ENCODE measurements at regions of chr9 and their contacts with region 1.

Region 1: DNA sequence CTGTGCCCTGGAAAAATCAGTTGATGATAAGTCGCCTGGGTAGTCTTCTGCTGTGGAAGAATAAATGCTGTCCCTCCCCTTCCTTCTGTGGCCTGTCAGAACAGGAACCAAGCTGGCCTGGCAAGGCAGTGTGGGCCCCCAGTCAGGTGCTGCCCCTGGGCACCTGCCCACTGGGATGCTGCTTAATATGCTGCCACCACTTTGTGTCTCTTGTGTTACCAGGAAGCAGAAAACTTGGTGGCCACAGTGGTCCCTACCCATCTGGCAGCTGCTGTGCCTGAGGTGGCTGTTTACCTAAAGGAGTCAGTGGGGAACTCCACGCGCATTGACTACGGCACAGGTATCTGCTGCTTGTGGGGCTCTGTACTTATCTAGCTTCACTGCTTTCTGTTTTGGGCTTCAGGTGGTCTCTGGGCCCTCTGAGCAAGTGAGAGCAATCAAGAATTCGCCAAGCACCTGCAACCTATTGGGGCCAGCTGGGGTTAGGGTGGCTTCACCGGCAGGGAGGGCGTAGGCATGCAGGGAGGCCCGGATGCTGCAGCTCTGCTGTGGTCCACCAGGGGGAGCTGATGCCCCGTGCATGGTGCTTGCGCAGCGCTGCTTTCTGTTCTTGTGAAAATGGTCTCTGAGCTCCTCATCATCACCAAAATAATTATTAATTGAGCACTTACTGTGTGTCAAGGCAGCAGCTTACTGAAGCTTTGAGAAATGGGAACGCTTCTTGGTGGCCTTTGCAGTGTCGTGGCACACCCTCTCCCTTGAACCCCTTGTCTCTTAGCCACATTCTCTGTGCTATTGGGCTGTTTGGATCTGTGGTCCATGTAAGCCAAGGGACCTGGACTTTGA is 20.3 kb downstream of the PTPA start:
- DNase-seq: peak; percentile 50
- H3K4me3 ChIP-seq: no peak overlapping the region
- H3K27ac ChIP-seq: no peak overlapping the region
- H3K4me1 ChIP-seq: no peaks in the 10 kb centered on the region
- H3K27me3 ChIP-seq: no peaks in the 10 kb centered on the region
- CTCF ChIP-seq: peak; percentile 99

Region 2: DNA sequence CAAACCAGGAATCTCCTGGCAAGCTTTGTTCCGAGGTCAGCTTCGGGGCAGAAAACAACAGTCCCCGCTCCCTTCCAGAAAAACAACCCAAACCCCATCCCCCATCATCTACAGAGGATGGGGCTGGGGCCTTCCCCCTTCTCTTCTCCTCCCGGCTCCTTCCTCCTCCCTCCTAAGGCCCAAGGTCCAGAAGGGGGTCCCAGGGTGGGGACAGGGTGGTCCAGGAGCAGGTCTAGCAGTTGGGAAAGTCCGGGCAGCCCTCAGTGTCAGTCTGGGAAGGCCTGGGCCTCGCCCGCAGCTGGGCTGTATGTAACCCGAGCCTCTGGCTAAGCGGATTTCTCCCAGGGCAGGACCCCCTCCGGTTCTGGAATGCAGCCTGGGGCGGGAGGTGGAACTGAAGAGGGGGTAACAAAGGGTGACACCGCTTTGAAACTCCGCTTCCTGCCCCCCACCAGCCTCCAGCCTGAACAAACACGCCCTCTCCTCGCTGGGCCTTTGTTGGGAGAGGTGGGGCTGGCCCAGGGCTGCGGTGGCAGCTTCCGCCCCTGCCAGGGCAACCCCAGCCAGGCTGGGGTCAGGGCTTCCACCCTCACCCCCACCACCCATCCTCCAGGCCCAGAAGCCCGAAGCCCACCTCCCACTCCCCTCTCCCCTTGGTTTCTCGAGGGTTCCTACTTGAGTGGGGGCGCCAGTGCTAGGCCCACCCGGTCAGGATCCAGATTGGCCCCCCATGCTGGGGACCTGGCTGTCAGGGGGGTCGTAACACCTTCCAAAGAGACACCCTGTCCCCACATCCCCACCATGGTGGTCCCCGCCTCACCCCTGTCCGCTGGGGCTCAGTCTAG is 425.9 kb after region 1 on chr9:
- CTCF ChIA-PET with region 1: no interaction called
- dilution Hi-C with region 1: loop called (anchors 5 kb)
- in situ Hi-C with region 1: no loop called
- intact Hi-C with region 1: no loop called
- DNase-seq: no peak
- H3K4me3 ChIP-seq: no peak overlapping the region
- H3K27ac ChIP-seq: no peak overlapping the region
- H3K4me1 ChIP-seq: peaks cover 8% of the 10 kb centered on the region
- H3K27me3 ChIP-seq: no peaks in the 10 kb centered on the region
- CTCF ChIP-seq: no peak

Region 3: GRCh38 chr9:129794549-129794948 is 663.0 kb after region 1 on chr9:
- CTCF ChIA-PET with region 1: no interaction called
- dilution Hi-C with region 1: no loop called
- in situ Hi-C with region 1: loop called (anchors 25 kb)
- intact Hi-C with region 1: loop called (anchors 5 kb)
- DNase-seq: no peak
- H3K4me3 ChIP-seq: no peak overlapping the region
- H3K27ac ChIP-seq: no peak overlapping the region
- H3K4me1 ChIP-seq: no peaks in the 10 kb centered on the region
- H3K27me3 ChIP-seq: no peaks in the 10 kb centered on the region
- CTCF ChIP-seq: no peak

Measured in mammary epithelial cell (primary cell).